BJ (cell line): ENCODE measurements at regions of chr12 and their contacts with region 1.

Region 1: DNA sequence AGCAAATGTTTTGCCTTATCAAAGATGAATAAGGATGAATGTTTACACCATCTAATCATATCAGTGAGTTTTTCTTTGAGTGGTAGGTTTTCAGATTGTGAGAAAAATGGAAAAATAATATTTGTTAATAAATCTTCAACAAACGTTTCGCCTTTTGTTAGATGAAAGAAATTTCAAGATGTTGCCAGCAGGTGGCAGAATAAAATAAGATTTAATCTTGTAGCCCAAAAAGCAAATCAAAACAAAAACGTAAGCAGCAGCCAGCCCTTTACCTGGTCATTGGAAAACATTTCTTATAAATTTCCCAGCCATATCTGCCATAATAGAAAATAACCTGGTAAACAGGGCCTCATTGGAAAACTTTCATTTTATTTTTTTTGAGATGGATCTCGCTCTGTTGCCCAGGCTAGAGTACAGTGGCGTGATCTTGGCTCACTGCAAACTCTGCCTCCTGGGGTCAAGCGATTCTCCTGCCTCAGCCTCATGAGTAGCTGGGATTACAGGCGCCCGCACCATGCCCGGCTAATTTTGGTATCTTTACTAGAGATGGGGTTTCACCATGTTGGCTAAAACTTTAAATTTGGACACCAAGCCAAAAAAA is 15.4 kb upstream of the TMEM120B start:
- DNase-seq: no peak
- H3K4me3 ChIP-seq: no peak overlapping the region
- H3K27me3 ChIP-seq: no peaks in the 10 kb centered on the region
- CTCF ChIP-seq: peak; percentile 27; the same call in 1 of the 2 replicates

Region 2: DNA sequence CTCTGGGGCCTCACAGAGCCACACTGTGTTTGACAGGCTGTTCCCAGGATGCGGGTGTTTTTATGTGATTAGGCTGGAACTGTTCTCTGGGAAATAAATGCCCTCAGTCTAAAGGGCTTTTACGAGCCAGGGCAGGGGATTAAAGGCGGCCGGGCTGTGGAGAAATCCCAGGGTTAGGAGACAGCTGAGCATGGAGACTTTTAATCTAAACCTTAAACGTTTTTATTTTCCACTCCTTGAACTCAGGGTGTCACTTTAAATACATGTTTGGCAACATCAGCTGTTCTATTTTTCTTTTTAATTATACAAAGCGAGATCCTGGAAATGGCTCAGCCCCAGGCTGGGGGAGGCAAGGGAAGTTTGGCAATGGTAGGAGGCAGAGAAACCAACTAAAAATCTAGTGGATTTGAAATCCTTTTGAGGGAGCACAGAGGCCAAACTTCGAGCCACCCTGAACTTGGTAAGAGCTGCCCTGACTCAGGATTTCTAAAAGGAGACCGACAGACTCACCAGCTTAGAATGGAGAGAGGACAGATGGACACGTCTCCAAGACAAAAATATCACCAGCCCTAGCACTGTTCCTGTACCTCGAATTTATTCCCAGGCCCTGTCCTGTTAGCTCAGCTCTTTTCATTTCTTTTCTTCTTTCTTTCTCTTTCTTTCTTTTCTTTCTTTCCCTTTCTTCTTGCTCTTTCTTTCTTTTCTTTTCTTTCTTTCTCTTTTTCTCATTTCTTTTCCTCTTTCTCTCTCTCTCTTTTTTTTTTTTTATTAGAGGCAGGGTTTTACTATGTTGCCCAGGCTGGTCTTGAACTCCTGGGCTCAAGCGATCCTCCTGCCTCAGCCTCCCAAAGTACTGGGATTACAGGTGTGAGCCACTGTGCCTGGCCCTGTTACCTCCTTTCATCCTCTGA is 86.7 kb before region 1 on chr12:
- CTCF ChIA-PET with region 1: no interaction called
- POLR2A ChIA-PET with region 1: no interaction called
- DNase-seq: no peak
- H3K4me3 ChIP-seq: no peak overlapping the region
- H3K27me3 ChIP-seq: no peaks in the 10 kb centered on the region; the same call in 1 of the 2 replicates
- CTCF ChIP-seq: no peak

Region 3: DNA sequence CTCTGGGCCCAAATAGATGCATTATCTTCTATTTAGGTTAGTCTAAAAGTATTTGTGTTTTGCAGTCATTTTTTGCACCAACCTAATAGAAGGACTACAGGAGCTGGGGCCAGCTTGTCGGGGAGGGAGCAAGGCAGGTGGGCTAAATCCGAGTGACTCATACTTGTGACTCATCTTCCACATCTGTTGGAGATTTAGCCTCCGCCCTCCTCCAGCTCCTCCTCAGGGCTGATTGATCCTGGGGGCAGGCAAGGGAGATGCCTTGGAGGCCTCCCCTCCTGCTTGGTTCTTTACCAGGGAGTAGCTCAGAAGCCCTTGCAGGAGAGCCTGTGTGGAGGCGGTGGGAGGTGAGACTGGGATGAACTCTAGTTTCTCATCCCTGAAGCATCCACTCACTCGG is 68.4 kb after region 1 on chr12:
- CTCF ChIA-PET with region 1: interaction called, 131 read pairs
- POLR2A ChIA-PET with region 1: no interaction called
- DNase-seq: peak; percentile 70
- H3K4me3 ChIP-seq: no peak overlapping the region
- H3K27me3 ChIP-seq: no peaks in the 10 kb centered on the region
- CTCF ChIP-seq: no peak

Region 4: DNA sequence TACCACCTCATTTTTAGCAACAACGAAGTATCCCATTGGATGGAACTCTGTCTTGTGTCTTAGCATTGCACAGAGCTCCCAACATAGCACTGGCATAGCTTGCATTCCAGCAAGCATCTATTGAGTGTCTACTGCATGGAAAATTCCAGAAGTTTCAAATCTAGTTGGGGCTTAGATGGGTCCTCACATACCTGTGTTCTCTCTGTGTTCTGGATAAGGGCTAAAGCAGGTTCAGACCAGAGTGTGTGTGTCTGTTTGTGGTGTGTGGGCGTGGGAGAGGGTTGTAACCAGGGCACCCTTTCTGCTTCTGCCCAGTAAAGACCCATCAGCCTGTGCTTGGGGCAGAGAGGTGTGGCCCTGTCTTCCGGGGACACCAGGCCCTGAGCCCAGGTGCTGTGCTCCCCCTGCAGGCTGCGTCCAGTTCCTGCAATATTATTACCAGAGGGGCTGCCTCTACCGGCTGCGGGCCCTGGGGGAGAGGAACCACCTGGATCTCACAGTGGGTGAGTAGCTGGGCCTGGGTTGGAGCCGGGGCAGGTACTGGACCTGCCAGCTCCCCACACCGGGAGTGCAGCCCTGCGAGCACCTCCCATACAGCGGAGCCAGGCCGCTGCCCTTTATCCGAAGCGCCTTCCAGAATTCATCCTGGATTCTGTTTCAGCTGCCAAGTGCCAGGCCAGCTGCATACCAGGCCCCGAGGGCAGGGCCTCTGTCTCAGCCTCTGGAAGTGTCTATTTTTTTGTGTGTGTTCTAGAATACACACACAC is 76.0 kb after region 1 on chr12:
- CTCF ChIA-PET with region 1: interaction called, 131 read pairs
- POLR2A ChIA-PET with region 1: no interaction called
- DNase-seq: no peak
- H3K4me3 ChIP-seq: no peak overlapping the region
- H3K27me3 ChIP-seq: no peaks in the 10 kb centered on the region
- CTCF ChIP-seq: peak; percentile 90

Region 5: GRCh38 chr12:121925358-121925695 is 228.1 kb after region 1 on chr12:
- CTCF ChIA-PET with region 1: no interaction called
- POLR2A ChIA-PET with region 1: no interaction called
- DNase-seq: peak; percentile 59
- H3K4me3 ChIP-seq: peak overlapping the region; percentile 12; the same call in 1 of the 2 replicates
- H3K27me3 ChIP-seq: no peaks in the 10 kb centered on the region
- CTCF ChIP-seq: no peak